ENCODE measurements at regions of chr2 and their contacts with region 1.

Region 1: GRCh38 chr2:102166189-102166845 is 20.5 kb upstream of the IL1RL2 start:
- DNase-seq: peak; percentile 68
- H3K4me3 Mint-ChIP-seq: no peak overlapping the region
- H3K27ac Mint-ChIP-seq: no peak overlapping the region
- H3K4me1 Mint-ChIP-seq: peaks cover 9% of the 10 kb centered on the region
- H3K27me3 Mint-ChIP-seq: no peaks in the 10 kb centered on the region
- CTCF ChIP-seq: peak; percentile 56

Region 2: GRCh38 chr2:102005989-102006885 is 160.1 kb before region 1 on chr2:
- CTCF ChIA-PET with region 1: interaction called, 37 read pairs
- POLR2A ChIA-PET with region 1: no interaction called
- intact Hi-C with region 1: no loop called
- DNase-seq: peak; percentile 71
- H3K4me3 Mint-ChIP-seq: no peak overlapping the region
- H3K27ac Mint-ChIP-seq: no peak overlapping the region
- H3K4me1 Mint-ChIP-seq: no peaks in the 10 kb centered on the region
- H3K27me3 Mint-ChIP-seq: no peaks in the 10 kb centered on the region
- CTCF ChIP-seq: peak; percentile 56

Region 3: GRCh38 chr2:102141970-102142828 is 24.1 kb before region 1 on chr2 and contains the start of gene IL1R1:
- CTCF ChIA-PET with region 1: interaction called, 13 read pairs
- POLR2A ChIA-PET with region 1: interaction called, 3 read pairs
- intact Hi-C with region 1: no loop called
- DNase-seq: peak; percentile 80
- H3K4me3 Mint-ChIP-seq: peak within 1 kb of the TSS; percentile 81
- H3K27ac Mint-ChIP-seq: peak within 1 kb of the TSS; percentile 68
- H3K4me1 Mint-ChIP-seq: no peaks in the 10 kb centered on the region
- H3K27me3 Mint-ChIP-seq: no peaks in the 10 kb centered on the region
- CTCF ChIP-seq: no peak
- total RNA-seq, gene IL1R1: 5.2 and 6.0 TPM in 2 replicates

Region 4: DNA sequence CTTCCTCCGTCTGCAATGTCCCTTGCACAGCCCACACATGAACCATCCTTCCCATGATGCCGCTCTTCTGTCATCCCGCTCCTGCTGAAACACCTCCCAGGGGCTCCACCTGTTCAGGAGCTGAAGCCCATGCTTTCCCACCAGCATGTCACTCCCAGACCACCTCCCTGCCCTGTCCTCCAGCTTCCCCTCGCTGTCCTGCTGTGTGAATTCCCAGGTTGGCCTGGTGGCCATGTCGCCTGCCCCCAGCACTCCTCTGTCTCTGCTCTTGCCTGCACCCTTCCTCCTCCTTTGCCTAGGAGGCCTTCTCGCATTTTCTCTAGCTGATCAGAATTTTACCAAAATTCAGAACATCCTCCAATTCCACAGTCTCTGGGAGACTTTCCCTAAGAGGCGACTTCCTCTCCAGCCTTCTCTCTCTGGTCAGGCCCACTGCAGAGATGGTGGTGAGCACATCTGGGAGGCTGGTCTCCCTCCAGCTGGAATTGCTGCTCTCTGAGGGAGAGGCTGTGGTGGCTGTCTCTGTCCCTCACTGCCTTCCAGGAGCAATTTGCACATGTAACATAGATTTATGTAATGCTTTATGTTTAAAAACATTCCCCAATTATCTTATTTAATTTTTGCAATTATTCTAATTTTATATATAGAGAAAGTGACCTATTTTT is 11.6 kb after region 1 on chr2:
- CTCF ChIA-PET with region 1: interaction called, 14 read pairs
- POLR2A ChIA-PET with region 1: no interaction called
- intact Hi-C with region 1: no loop called
- DNase-seq: no peak
- H3K4me3 Mint-ChIP-seq: no peak overlapping the region
- H3K27ac Mint-ChIP-seq: no peak overlapping the region
- H3K4me1 Mint-ChIP-seq: no peaks in the 10 kb centered on the region
- H3K27me3 Mint-ChIP-seq: no peaks in the 10 kb centered on the region
- CTCF ChIP-seq: no peak

Region 5: GRCh38 chr2:102355526-102356380 is 189.4 kb after region 1 on chr2 and contains the start of gene IL18R1:
- CTCF ChIA-PET with region 1: no interaction called
- POLR2A ChIA-PET with region 1: no interaction called
- intact Hi-C with region 1: loop called (anchors 5 kb)
- DNase-seq: peak; percentile 71
- H3K4me3 Mint-ChIP-seq: peak within 1 kb of the TSS; percentile 87
- H3K27ac Mint-ChIP-seq: peak within 1 kb of the TSS; percentile 68
- H3K4me1 Mint-ChIP-seq: peaks cover 19% of the 10 kb centered on the region
- H3K27me3 Mint-ChIP-seq: no peaks in the 10 kb centered on the region
- CTCF ChIP-seq: peak; percentile 85
- total RNA-seq, gene IL18R1: 3.5 and 6.7 TPM in 2 replicates